IMR-90 (cell line): ENCODE measurements at regions of chr14 and their contacts with region 1.

Region 1: DNA sequence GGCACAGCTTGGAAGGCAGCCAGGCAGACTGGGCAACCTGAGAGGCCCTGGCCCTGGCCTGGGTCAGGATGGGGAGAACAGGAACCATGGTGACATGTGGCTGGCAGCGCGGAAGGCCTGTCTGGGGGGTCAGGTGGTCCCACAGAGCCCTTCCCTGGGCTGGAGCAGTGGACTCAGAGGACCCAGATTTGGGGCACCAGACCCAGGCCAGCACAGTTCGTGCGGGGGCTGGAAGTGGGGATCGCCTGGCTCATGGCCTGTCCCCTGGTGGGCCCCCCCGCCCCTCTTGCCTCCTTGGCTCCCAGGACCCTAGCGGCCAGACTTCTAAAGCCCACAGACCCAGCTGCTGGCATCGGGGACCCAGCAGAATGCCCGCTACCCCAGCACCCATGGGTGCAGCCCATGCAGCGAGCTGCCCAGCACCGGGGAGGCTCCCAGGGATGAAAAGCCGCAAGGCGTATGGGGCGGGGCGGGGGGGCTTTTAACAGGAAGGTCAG is 21.4 kb downstream of the MTA1 start:
- DNase-seq: no peak
- ATAC-seq: no peak
- H3K4me3 ChIP-seq: no peak overlapping the region
- H3K27ac ChIP-seq: no peak overlapping the region
- H3K4me1 ChIP-seq: no peaks in the 10 kb centered on the region
- H3K27me3 ChIP-seq: no peaks in the 10 kb centered on the region
- CTCF ChIP-seq: no peak
- POLR2A ChIP-seq: no peak
- RAD21 ChIP-seq: no peak

Region 2: GRCh38 chr14:105223260-105223659 is 217.8 kb before region 1 on chr14:
- CTCF ChIA-PET with region 1: no interaction called
- POLR2A ChIA-PET with region 1: no interaction called
- dilution Hi-C with region 1: no loop called
- in situ Hi-C with region 1: no loop called
- intact Hi-C with region 1: no loop called
- DNase-seq: no peak
- ATAC-seq: no peak
- H3K4me3 ChIP-seq: no peak overlapping the region
- H3K27ac ChIP-seq: no peak overlapping the region
- H3K4me1 ChIP-seq: peaks cover 2% of the 10 kb centered on the region; the same call in 1 of the 2 replicates
- H3K27me3 ChIP-seq: no peaks in the 10 kb centered on the region
- CTCF ChIP-seq: no peak
- POLR2A ChIP-seq: no peak
- RAD21 ChIP-seq: no peak

Region 3: DNA sequence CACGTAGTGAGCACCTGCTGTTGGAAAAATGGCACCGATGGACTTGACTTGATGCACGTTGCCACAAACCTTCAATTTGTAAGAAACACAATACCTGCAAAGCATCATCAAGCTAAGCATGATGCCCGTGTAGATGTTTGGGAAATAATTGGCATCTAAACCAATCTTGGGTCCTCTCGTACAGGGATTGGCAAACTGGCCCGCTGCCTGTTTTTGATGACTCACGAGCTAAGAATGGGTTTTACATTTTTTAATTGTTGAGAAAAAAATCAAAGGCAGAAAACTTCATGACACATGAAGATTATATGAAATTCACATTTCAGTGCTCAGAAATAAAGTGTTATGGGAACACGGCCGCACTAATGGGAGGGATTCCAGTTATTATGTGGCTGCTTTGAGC is 10.5 kb before region 1 on chr14:
- CTCF ChIA-PET with region 1: no interaction called
- POLR2A ChIA-PET with region 1: interaction called, 15 read pairs
- dilution Hi-C with region 1: no loop called
- in situ Hi-C with region 1: no loop called
- intact Hi-C with region 1: no loop called
- DNase-seq: peak; percentile 66
- ATAC-seq: peak; percentile 50
- H3K4me3 ChIP-seq: no peak overlapping the region
- H3K27ac ChIP-seq: no peak overlapping the region
- H3K4me1 ChIP-seq: no peaks in the 10 kb centered on the region; the same call in 1 of the 2 replicates
- H3K27me3 ChIP-seq: no peaks in the 10 kb centered on the region
- CTCF ChIP-seq: no peak
- POLR2A ChIP-seq: no peak
- RAD21 ChIP-seq: no peak

Region 4: DNA sequence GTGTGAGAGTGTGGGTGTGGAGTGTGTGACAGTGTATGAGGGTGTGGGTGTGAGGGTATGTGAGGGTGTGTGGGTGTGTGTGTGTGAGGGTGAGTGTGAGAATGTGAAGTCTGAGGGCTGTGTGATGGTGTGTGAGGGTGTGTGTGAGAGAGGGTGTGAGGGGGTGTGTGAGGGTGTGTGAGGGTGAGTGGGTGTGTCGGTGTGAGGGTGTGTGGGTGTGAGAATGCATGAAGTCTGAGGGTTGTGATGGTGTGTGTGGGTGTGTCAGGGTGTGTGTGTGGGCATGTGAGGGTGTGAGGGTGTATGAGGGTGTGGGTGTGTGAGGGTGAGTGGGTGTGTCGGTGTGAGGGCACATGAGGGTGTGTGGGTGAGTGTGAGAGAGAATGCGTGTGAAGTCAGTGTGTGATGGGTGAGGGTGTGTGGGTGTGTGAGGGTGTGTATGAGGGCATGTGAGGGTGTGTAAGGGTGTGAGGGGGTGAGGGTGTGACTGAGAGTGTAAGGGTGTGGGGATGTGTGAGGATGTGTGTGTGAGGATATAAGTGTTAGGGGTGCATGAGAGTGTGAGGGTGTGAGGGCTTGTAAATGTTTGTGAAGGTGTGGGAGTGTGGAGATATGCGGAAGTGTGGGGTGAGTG is 121.8 kb after region 1 on chr14:
- CTCF ChIA-PET with region 1: no interaction called
- POLR2A ChIA-PET with region 1: no interaction called
- dilution Hi-C with region 1: no loop called
- in situ Hi-C with region 1: no loop called
- intact Hi-C with region 1: no loop called
- DNase-seq: no peak
- ATAC-seq: no peak
- H3K4me3 ChIP-seq: no peak overlapping the region
- H3K27ac ChIP-seq: no peak overlapping the region
- H3K4me1 ChIP-seq: no peaks in the 10 kb centered on the region
- H3K27me3 ChIP-seq: no peaks in the 10 kb centered on the region
- CTCF ChIP-seq: no peak
- POLR2A ChIP-seq: no peak
- RAD21 ChIP-seq: no peak